Heart left ventricle (tissue), 16 donors: ENCODE measurements at regions of chr16 and their contacts with region 1.

Region 1: GRCh38 chr16:87435372-87436224 is 43.5 kb downstream of the MAP1LC3B start:
- DNase-seq: no peak
- ATAC-seq: peak; percentile 50 to 83 (median 69)
- H3K4me3 ChIP-seq: peak overlapping the region in 8 of 12 donors; percentile 10 to 32 (median 25)
- H3K27ac ChIP-seq: peak overlapping the region; percentile 56 to 79 (median 68)
- H3K4me1 ChIP-seq: peaks cover 3 to 49% (median 27%) of the 10 kb centered on the region in 12 donors
- H3K27me3 ChIP-seq: no peaks in the 10 kb centered on the region
- CTCF ChIP-seq: no peak
- POLR2A ChIP-seq: no peak

Region 2: GRCh38 chr16:87344931-87345631 is 90.5 kb before region 1 on chr16:
- intact Hi-C with region 1: no loop called
- DNase-seq: peak in 4 of 5 donors; percentile 39 to 56 (median 46)
- ATAC-seq: peak in 3 of 4 donors; percentile 60 to 67 (median 60)
- H3K4me3 ChIP-seq: peak overlapping the region in 3 of 12 donors; percentile 8 to 20 (median 13)
- H3K27ac ChIP-seq: peak overlapping the region in 10 of 12 donors; percentile 22 to 74 (median 64)
- H3K4me1 ChIP-seq: peaks cover 0 to 23% (median 14%) of the 10 kb centered on the region in 12 donors
- H3K27me3 ChIP-seq: no peaks in the 10 kb centered on the region
- CTCF ChIP-seq: no peak
- POLR2A ChIP-seq: no peak

Region 3: GRCh38 chr16:87460926-87461325 is 25.3 kb after region 1 on chr16:
- intact Hi-C with region 1: no loop called
- DNase-seq: no peak
- ATAC-seq: no peak
- H3K4me3 ChIP-seq: no peak overlapping the region
- H3K27ac ChIP-seq: peak overlapping the region in 2 of 12 donors; percentile 2 to 36
- H3K4me1 ChIP-seq: peaks cover 25 to 73% (median 54%) of the 10 kb centered on the region in 12 donors
- H3K27me3 ChIP-seq: no peaks in the 10 kb centered on the region
- CTCF ChIP-seq: no peak
- POLR2A ChIP-seq: no peak

Region 4: DNA sequence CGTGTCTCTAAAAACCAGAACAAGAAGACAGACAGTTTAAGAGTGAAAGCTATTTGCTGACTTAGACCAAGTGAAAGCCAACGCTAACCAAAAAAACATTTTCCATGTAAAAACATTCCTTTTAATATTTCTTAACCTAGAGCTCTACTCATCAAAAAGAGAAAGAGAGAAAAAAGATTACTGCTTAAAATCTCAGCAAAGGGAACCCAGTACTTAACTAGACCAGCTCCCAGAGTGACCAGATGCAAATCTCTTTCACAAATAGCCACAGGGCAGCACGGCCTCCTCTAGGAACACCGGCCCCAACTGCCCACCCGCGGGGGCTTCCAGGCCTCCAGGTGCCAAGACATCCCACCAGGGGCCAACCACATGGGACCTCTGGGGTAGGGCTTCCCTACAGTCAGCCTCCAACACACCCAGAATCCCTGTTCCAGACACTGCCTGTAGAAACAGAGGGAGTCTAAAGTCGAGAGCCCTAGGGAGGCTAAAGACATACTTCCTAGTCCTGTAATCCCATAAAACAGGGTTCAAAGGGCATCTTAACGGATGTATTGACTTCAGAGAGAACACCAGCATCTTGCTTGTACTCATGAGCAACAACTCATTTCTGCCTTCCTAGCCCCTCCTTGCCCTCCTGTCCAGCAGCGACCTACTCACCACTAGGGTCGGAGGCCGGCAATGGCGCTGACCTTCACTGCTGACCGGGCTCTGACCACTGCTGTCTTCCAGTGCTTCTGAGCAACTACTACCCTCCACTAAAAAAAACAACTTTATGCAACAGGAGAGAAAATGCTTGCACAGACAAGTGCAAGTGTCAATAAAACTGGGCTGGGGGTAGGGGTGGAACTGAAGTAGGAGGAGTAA is 35.9 kb after region 1 on chr16:
- intact Hi-C with region 1: loop called in 1 of 10 experiments (anchors 5 kb)
- DNase-seq: no peak
- ATAC-seq: peak in 1 of 4 donors; percentile 36
- H3K4me3 ChIP-seq: peak overlapping the region in 2 of 12 donors; percentile 12 to 14
- H3K27ac ChIP-seq: peak overlapping the region in 9 of 12 donors; percentile 11 to 69 (median 24)
- H3K4me1 ChIP-seq: peaks cover 4 to 81% (median 62%) of the 10 kb centered on the region in 12 donors
- H3K27me3 ChIP-seq: no peaks in the 10 kb centered on the region
- CTCF ChIP-seq: no peak
- POLR2A ChIP-seq: no peak

Region 5: DNA sequence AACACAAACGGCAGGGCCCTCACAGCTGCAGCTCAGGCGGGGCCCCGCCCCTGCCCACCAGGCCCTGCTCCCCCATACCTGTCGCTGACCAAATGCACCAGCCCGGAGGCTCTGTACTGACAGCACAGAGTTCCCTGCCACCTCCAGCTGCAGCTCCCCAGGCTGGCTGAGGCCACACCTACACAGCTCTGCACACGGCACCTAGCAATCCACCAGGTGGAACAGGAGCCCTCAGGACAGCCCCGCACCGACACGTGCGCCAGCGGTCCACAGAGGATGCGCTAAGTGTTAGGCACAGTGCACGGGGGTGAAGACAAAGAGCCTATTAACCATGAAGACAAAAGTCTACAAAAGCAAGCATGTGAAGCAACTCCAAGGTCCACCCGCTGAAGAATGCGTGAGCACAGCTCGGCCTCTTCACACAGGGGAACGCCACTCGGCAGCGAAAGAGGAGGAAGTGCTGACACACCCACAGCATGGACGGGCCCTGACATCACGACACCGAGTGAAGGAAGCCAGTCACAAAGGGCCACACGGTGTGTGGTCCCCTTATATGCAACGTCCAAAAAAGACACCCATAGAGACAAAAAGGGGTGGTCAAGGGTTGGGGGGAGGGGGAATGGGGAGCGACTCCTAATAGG is 51.9 kb after region 1 on chr16:
- intact Hi-C with region 1: loop called in 3 of 10 experiments (anchors 5 to 10 kb)
- DNase-seq: peak in 2 of 5 donors; percentile 56 to 60
- ATAC-seq: peak; percentile 14 to 64 (median 43)
- H3K4me3 ChIP-seq: peak overlapping the region in 3 of 12 donors; percentile 26 to 37 (median 29)
- H3K27ac ChIP-seq: peak overlapping the region in 6 of 12 donors; percentile 3 to 41 (median 12)
- H3K4me1 ChIP-seq: peaks cover 7 to 92% (median 69%) of the 10 kb centered on the region in 12 donors
- H3K27me3 ChIP-seq: no peaks in the 10 kb centered on the region
- CTCF ChIP-seq: no peak
- POLR2A ChIP-seq: no peak

Region 6: DNA sequence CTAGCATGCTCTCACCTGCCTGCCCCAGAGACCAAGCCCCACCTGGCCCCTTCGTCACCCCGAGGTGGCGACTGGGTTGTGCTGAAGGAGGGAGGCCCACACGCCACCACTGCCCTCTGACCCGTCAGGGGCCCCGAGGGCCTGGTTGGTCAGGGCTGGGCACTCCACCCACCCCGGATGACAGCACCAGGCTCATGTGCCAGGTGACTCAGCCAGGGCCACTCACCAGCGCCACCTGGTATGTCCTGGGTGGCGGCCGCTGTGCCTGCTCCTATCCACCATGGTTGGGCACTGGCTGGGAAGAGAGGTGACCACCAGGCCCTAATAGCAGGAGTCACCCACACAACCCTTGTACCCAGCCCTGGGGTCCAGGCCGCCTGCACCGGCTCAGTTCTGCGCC is 235.6 kb after region 1 on chr16:
- intact Hi-C with region 1: no loop called
- DNase-seq: no peak
- ATAC-seq: no peak
- H3K4me3 ChIP-seq: no peak overlapping the region
- H3K27ac ChIP-seq: no peak overlapping the region
- H3K4me1 ChIP-seq: no peaks in the 10 kb centered on the region
- H3K27me3 ChIP-seq: peaks cover 0 to 18% (median 0%) of the 10 kb centered on the region in 9 donors
- CTCF ChIP-seq: no peak
- POLR2A ChIP-seq: no peak